PC-9 (cell line): ENCODE measurements at regions of chr1 and their contacts with region 1.

Region 1: DNA sequence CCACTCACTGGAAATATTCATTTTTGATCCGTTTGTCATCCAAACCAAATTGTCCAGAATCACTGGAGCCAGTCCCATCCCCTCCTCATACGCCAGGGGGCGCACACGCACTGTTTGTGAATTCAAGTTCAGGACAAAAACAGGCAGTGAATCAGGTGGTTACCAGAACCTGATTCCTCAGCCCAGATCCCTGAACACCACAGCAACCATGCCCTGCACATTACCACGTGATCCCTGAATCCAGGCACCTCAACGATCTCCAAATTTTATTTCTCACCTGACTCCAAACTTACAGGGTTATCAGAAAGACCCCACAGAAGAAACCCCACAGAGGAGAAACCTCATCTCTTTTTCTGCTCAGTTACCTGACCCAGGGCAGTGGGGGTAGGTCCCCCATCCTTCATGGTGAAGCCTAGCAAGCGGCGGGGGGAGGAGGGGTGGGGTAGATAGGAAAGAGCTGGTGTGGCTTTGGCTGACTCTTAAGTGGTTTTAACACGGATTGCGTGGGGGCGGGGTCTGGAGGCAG is 1.4 kb upstream of the PTPRF start:
- DNase-seq: peak; percentile 64 to 82
- H3K4me3 ChIP-seq: no peak overlapping the region
- H3K27ac ChIP-seq: no peak overlapping the region
- H3K4me1 ChIP-seq: peaks cover 40% of the 10 kb centered on the region
- H3K27me3 ChIP-seq: no peaks in the 10 kb centered on the region
- CTCF ChIP-seq: peak; percentile 94

Region 2: DNA sequence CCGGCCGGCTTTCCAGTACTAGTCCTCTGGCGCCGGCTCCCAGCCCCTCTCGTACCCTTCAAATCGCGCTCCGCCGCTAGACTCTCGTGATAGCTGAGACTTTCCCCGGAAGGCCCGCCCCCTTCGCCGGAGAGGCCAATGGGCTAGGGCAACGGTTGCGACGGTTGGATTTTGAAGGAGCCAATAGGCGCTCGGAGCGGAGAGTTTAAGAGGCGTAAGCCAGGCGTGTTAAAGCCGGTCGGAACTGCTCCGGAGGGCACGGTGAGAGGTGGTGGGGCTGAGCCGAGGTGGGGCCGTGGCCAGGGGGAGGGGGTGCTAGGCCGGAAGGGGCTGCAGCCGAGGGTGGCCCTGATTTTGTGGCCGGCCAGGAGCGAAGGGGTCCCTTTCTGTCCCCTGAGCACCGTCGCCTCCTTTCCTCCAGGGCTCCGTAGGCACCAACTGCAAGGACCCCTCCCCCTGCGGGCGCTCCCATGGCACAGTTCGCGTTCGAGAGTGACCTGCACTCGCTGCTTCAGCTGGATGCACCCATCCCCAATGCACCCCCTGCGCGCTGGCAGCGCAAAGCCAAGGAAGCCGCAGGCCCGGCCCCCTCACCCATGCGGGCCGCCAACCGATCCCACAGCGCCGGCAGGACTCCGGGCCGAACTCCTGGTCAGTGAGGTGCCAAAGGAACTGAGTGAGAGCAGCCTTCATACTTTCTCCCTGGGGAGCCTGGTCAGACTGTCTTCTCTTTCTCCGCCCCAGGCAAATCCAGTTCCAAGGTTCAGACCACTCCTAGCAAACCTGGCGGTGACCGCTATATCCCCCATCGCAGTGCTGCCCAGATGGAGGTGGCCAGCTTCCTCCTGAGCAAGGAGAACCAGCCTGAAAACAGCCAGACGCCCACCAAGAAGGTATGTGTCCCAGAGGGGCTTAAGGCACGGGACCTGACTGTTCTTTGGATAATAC is 170.2 kb before region 1 on chr1 and contains the start of gene CDC20:
- CTCF ChIA-PET with region 1: interaction called, 8 read pairs
- POLR2A ChIA-PET with region 1: interaction called, 6 read pairs
- intact Hi-C with region 1: loop called (anchors 5 kb)
- DNase-seq: peak; percentile 95 to 99
- H3K4me3 ChIP-seq: peak within 1 kb of the TSS; percentile 86
- H3K27ac ChIP-seq: peak within 1 kb of the TSS; percentile 83
- H3K4me1 ChIP-seq: peaks cover 47% of the 10 kb centered on the region
- H3K27me3 ChIP-seq: no peaks in the 10 kb centered on the region
- CTCF ChIP-seq: no peak
- total RNA-seq, gene CDC20: 180 and 229 TPM in 2 replicates

Region 3: DNA sequence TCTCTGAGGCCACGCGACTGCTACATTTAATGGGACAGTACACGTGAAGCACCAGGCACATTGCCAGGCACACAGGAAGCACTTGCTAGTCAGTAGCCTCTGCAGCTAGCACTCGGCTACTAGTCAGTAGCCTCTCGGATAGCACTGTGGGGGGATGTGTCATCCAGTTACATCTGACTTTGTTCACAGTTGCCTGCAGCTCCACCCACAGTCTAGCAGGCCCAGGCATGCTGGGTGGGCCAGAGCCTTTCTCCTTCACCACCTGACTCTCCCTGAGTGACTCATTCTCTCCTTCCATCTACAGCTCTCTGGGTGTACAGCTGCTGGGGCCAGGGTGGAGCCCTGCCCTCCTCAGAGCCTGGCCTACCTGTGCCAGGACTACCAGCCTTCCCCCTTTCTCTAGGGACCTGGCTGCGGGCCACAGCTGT is 52.9 kb after region 1 on chr1:
- CTCF ChIA-PET with region 1: interaction called, 5 read pairs
- POLR2A ChIA-PET with region 1: no interaction called
- intact Hi-C with region 1: loop called (anchors 1 kb)
- DNase-seq: peak; percentile 91 to 93
- H3K4me3 ChIP-seq: no peak overlapping the region
- H3K27ac ChIP-seq: peak overlapping the region; percentile 21; the same call in 1 of the 2 replicates
- H3K4me1 ChIP-seq: peaks cover 14% of the 10 kb centered on the region
- H3K27me3 ChIP-seq: no peaks in the 10 kb centered on the region
- CTCF ChIP-seq: no peak

Region 4: GRCh38 chr1:43650310-43651085 is 121.2 kb after region 1 on chr1:
- CTCF ChIA-PET with region 1: interaction called, 11 read pairs
- POLR2A ChIA-PET with region 1: interaction called, 7 read pairs
- intact Hi-C with region 1: loop called (anchors 1 kb)
- DNase-seq: peak; percentile 92 to 95
- H3K4me3 ChIP-seq: peak overlapping the region; percentile 86
- H3K27ac ChIP-seq: peak overlapping the region; percentile 70
- H3K4me1 ChIP-seq: peaks cover 25% of the 10 kb centered on the region
- H3K27me3 ChIP-seq: no peaks in the 10 kb centered on the region
- CTCF ChIP-seq: no peak

Region 5: GRCh38 chr1:43763497-43763973 is 234.3 kb after region 1 on chr1:
- CTCF ChIA-PET with region 1: no interaction called
- POLR2A ChIA-PET with region 1: no interaction called
- intact Hi-C with region 1: loop called (anchors 1 kb)
- DNase-seq: peak; percentile 77 to 80
- H3K4me3 ChIP-seq: no peak overlapping the region
- H3K27ac ChIP-seq: peak overlapping the region; percentile 27
- H3K4me1 ChIP-seq: peaks cover 8% of the 10 kb centered on the region
- H3K27me3 ChIP-seq: no peaks in the 10 kb centered on the region
- CTCF ChIP-seq: peak; percentile 95

Region 6: GRCh38 chr1:43946236-43947060 is 417.2 kb after region 1 on chr1 and contains the start of gene IPO13:
- CTCF ChIA-PET with region 1: no interaction called
- POLR2A ChIA-PET with region 1: no interaction called
- intact Hi-C with region 1: loop called (anchors 2 kb)
- DNase-seq: peak; percentile 86 to 98
- H3K4me3 ChIP-seq: peak within 1 kb of the TSS; percentile 74
- H3K27ac ChIP-seq: peak within 1 kb of the TSS; percentile 75
- H3K4me1 ChIP-seq: peaks cover 26% of the 10 kb centered on the region
- H3K27me3 ChIP-seq: no peaks in the 10 kb centered on the region
- CTCF ChIP-seq: peak; percentile 79
- total RNA-seq, gene IPO13: 25.0 and 27.2 TPM in 2 replicates

Region 7: GRCh38 chr1:44036409-44037139 is 507.3 kb after region 1 on chr1:
- CTCF ChIA-PET with region 1: no interaction called
- POLR2A ChIA-PET with region 1: no interaction called
- intact Hi-C with region 1: loop called (anchors 1 kb)
- DNase-seq: peak; percentile 59 to 77
- H3K4me3 ChIP-seq: no peak overlapping the region
- H3K27ac ChIP-seq: peak overlapping the region; percentile 20; the same call in 1 of the 2 replicates
- H3K4me1 ChIP-seq: peaks cover 27% of the 10 kb centered on the region
- H3K27me3 ChIP-seq: no peaks in the 10 kb centered on the region
- CTCF ChIP-seq: peak; percentile 89